PC-9 (cell line): ENCODE measurements at regions of chr6 and their contacts with region 1.

Region 1: GRCh38 chr6:166619912-166620311 is 7.1 kb downstream of the RPS6KA2 start:
- DNase-seq: peak; percentile 60 to 92
- H3K4me3 ChIP-seq: no peak overlapping the region; the same call in 1 of the 2 replicates
- H3K27ac ChIP-seq: peak overlapping the region; percentile 87
- H3K4me1 ChIP-seq: peaks cover 55% of the 10 kb centered on the region
- H3K27me3 ChIP-seq: no peaks in the 10 kb centered on the region
- CTCF ChIP-seq: no peak

Region 2: DNA sequence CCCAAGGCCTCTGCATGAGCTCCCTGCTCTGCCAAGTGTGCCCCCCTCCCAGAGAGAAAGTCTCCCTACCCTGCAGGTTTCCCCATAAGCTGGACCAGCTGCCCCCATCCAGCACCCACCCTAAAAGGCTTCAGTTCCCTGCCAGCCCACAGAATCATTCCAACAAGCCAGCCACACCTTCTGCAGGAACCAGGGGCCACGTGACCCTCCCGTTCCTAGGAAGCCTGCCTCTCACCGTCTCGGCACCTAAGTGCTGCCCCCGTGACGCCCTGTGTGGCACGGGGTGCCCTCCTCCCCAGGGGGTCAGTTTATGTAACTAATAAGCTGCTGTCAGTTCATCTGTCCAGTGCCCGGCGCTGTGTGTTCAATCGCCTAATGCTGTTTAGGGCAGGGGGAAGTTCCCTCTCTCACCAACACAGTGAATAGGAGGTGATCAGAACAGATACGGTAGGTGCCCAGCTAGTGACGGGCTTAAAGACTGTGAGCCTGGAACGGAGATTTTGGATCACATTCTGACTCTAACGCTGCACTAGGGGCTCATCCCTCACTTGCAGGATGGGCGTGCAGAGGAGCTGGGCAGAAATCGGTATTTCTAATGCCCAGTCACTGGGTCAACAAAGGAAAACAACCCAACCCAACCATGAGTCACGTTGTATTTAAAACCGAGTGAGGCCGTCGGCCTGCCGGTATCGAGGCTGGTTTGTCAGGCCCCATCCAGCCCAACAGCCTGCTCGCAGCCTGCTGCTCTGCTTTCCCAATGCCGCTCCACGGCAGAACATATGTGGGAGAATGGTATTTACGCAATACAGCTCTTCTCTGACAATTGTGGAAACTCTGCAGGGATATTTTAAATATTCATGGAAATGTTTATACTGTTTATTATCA is 89.5 kb before region 1 on chr6:
- CTCF ChIA-PET with region 1: no interaction called
- POLR2A ChIA-PET with region 1: no interaction called
- intact Hi-C with region 1: loop called (anchors 2 kb)
- DNase-seq: peak; percentile 58 to 93
- H3K4me3 ChIP-seq: peak overlapping the region; percentile 48
- H3K27ac ChIP-seq: peak overlapping the region; percentile 86
- H3K4me1 ChIP-seq: peaks cover 36% of the 10 kb centered on the region
- H3K27me3 ChIP-seq: no peaks in the 10 kb centered on the region
- CTCF ChIP-seq: no peak